Dendritic cell treated with granulocyte-macrophage colony-stimulating factor and Interleukin-4, amounts not matched to agents 40 ng/mL and 50 ng/mL, for 4 days (primary cell): ENCODE measurements at regions of chr15 and their contacts with region 1.

Region 1: DNA sequence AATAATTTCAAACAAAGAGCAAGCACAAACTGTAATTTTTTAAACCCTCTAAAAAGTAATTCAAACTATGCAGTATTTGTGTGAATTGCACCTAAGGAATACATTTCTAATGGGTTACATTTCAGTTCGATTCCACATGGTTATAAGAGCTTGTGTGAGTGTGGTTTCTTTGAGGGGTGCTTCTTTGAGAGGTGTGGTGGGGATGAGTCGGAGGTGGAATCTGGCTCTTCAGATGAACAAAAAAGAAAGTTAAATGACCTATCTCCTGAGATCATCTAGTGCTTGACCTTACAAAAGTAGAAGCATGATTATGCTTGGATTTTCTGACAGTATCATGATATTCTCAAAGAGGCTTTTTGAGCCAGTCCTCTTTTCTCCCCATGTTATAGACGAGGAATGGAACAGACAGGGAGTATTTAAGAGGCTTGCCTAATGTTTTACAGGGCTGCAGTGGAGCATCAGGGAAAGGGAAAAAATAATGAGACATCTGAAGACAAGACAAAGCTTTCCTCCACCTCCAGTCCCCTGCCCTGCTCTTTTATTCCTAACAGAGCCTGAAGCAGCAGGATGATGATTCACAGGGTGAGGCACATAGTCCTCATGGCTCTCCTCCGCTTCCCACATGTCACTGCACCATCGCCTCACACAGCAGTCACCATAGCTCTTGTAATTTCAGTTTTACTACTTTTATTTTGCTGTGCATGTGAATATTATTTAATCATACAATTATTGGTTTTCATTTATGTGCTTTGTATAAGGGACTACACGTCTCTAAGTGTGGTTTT is 82.0 kb downstream of the LYSMD4 start:
- H3K4me3 Mint-ChIP-seq: no peak overlapping the region
- H3K27ac Mint-ChIP-seq: no peak overlapping the region
- H3K4me1 Mint-ChIP-seq: peaks cover 5% of the 10 kb centered on the region
- H3K27me3 Mint-ChIP-seq: no peaks in the 10 kb centered on the region

Region 2: GRCh38 chr15:99507504-99508310 is 143.5 kb before region 1 on chr15:
- intact Hi-C with region 1: no loop called
- H3K4me3 Mint-ChIP-seq: no peak overlapping the region
- H3K27ac Mint-ChIP-seq: no peak overlapping the region
- H3K4me1 Mint-ChIP-seq: peaks cover 74% of the 10 kb centered on the region
- H3K27me3 Mint-ChIP-seq: peaks cover 2% of the 10 kb centered on the region

Region 3: GRCh38 chr15:99592145-99592791 is 58.9 kb before region 1 on chr15:
- intact Hi-C with region 1: loop called (anchors 10 kb)
- H3K4me3 Mint-ChIP-seq: no peak overlapping the region
- H3K27ac Mint-ChIP-seq: no peak overlapping the region
- H3K4me1 Mint-ChIP-seq: peaks cover 60% of the 10 kb centered on the region
- H3K27me3 Mint-ChIP-seq: no peaks in the 10 kb centered on the region

Region 4: DNA sequence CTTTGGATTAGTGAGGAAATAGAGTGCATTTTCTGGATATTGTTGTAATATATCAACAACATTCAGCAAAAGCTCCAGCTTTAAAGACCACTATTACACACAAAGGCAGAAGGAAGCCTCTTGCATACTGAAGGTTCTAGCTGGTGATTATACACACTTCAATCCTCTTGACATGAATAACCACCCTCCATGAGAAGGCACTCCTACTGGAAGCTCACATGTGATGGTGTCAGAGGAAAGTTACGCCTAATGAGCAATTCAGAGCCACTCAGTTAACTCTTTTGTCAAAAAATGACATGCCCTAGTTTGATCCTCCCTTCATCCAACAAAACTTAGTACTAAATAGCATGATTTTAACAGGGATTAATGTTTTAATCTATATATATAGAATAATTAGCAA is 206.6 kb after region 1 on chr15:
- intact Hi-C with region 1: no loop called
- H3K4me3 Mint-ChIP-seq: no peak overlapping the region
- H3K27ac Mint-ChIP-seq: no peak overlapping the region
- H3K4me1 Mint-ChIP-seq: no peaks in the 10 kb centered on the region
- H3K27me3 Mint-ChIP-seq: no peaks in the 10 kb centered on the region